ENCODE measurements at regions of chr10 and their contacts with region 1.

Region 1: DNA sequence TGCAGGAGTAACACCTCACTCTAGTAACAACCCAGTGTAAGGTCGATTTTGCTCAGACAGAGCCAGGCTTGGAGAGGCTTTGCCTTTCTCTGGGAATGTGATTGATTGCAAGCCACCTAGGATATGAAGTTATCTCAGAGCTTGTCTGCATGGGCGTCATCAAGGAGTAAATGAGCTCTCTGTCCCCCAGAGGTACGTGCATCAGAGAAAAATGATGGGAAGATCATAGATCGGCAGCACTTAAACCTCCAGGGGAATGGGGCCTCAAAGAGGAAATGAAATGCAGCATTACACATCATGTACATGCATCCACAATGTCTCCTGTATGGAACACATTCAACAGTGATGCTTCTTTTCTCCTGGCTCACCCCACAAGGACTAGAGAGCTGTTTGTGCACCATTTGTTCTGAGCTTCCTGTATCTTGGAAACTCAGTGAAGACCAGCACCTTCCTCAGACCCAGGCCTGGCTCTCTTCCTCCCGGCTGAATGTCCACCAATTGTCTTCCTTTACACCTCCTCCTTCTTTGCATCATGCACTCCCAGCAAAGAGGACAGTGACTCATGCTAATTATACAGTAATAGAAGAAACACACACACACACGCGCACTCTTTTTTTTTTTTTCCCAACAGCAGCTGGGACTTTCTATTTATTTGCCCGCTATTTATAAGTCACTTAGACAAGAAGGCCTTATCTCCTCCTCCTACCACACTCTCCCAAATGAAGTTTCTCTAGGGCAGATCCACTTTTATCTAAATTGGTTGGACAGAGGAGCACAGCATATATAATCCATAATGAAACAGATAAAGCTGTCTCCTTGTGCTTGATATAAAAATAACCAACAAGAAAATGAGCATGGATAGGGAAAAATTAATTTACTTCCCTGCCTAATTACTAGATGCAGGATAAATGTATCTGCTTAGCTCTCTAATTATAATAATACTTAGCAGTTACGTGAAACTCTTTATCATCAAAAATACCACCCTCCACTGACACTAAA is 990.7 kb downstream of the CCSER2 start:
- DNase-seq: no peak
- H3K4me3 ChIP-seq: no peak overlapping the region
- H3K27ac ChIP-seq: no peak overlapping the region
- H3K4me1 ChIP-seq: no peaks in the 10 kb centered on the region
- H3K27me3 ChIP-seq: no peaks in the 10 kb centered on the region
- CTCF ChIP-seq: no peak
- POLR2A ChIP-seq: no peak

Region 2: GRCh38 chr10:86117051-86117450 is 797.9 kb after region 1 on chr10:
- intact Hi-C with region 1: loop called (anchors 5 kb)
- DNase-seq: no peak
- H3K4me3 ChIP-seq: no peak overlapping the region
- H3K27ac ChIP-seq: no peak overlapping the region
- H3K4me1 ChIP-seq: no peaks in the 10 kb centered on the region
- H3K27me3 ChIP-seq: no peaks in the 10 kb centered on the region
- CTCF ChIP-seq: no peak
- POLR2A ChIP-seq: no peak

Measured in vagina (tissue), 2 donors.